Right ventricle myocardium inferior (tissue), 1 donor: ENCODE measurements at regions of chr7 and their contacts with region 1.

Region 1: GRCh38 chr7:142853739-142854371 is 1.0 kb upstream of the EPHB6 start:
- DNase-seq: peak; percentile 86
- ATAC-seq: peak; percentile 74

Region 2: GRCh38 chr7:142196066-142196840 is 657.6 kb before region 1 on chr7:
- intact Hi-C with region 1: no loop called
- DNase-seq: no peak
- ATAC-seq: no peak

Region 3: GRCh38 chr7:142689439-142690120 is 164.3 kb before region 1 on chr7:
- intact Hi-C with region 1: no loop called
- DNase-seq: no peak
- ATAC-seq: no peak

Region 4: GRCh38 chr7:142811154-142811737 is 42.6 kb before region 1 on chr7:
- intact Hi-C with region 1: no loop called
- DNase-seq: no peak
- ATAC-seq: peak; percentile 33

Region 5: GRCh38 chr7:143008007-143008901 is 154.4 kb after region 1 on chr7:
- intact Hi-C with region 1: loop called (anchors 5 kb)
- DNase-seq: peak; percentile 91
- ATAC-seq: peak; percentile 91